Activated B cell treated with CpG ODN at 0.5 μM for 24 hours (primary cell): ENCODE measurements at regions of chr18 and their contacts with region 1.

Region 1: GRCh38 chr18:62131301-62131909 is 55.5 kb downstream of the PIGN start:
- DNase-seq: no peak
- ATAC-seq: peak; percentile 62
- H3K4me3 Mint-ChIP-seq: no peak overlapping the region
- H3K27ac Mint-ChIP-seq: no peak overlapping the region
- H3K4me1 Mint-ChIP-seq: no peaks in the 10 kb centered on the region
- H3K27me3 Mint-ChIP-seq: no peaks in the 10 kb centered on the region
- CTCF ChIP-seq: peak; percentile 82

Region 2: GRCh38 chr18:60684843-60685513 is 1446.4 kb before region 1 on chr18:
- CTCF ChIA-PET with region 1: no interaction called
- POLR2A ChIA-PET with region 1: no interaction called
- intact Hi-C with region 1: loop called (anchors 5 kb)
- DNase-seq: no peak
- ATAC-seq: no peak
- H3K4me3 Mint-ChIP-seq: no peak overlapping the region
- H3K27ac Mint-ChIP-seq: no peak overlapping the region
- H3K4me1 Mint-ChIP-seq: no peaks in the 10 kb centered on the region
- H3K27me3 Mint-ChIP-seq: no peaks in the 10 kb centered on the region
- CTCF ChIP-seq: no peak

Region 3: GRCh38 chr18:61322265-61322873 is 809.0 kb before region 1 on chr18:
- CTCF ChIA-PET with region 1: interaction called, 4 read pairs
- POLR2A ChIA-PET with region 1: no interaction called
- intact Hi-C with region 1: loop called (anchors 1 kb)
- DNase-seq: no peak
- ATAC-seq: peak; percentile 42
- H3K4me3 Mint-ChIP-seq: no peak overlapping the region
- H3K27ac Mint-ChIP-seq: no peak overlapping the region
- H3K4me1 Mint-ChIP-seq: no peaks in the 10 kb centered on the region
- H3K27me3 Mint-ChIP-seq: peaks cover 1% of the 10 kb centered on the region
- CTCF ChIP-seq: no peak

Region 4: DNA sequence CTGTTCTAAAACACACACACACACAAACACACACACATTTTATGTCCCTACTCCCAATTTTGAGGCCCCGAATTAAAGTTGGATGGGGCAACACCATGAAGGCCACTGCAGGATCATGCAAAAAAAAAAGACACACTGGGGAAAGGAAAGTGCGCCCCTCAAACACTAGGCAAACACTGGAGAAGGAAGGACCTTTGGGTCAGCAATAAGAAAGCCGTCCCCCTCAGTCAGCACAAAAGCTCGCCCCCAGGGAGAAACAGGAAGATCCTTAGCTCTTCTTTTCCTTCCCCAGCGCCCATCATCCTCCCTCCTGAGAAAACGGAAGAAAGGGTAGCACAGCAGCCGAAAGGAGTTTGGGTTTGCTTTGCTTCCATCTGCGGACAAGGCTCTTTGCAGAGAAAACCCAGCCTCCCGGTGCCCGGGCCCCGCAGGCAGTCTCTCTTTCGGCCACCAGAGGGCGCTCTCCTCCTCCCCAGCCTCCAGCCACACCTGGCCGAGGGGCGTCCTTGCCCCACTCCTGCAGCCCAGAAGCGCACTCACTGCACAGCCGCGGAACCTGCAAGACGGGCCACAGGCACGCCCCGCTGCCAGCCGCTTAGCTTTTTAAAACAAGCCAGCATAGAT is 549.7 kb before region 1 on chr18:
- CTCF ChIA-PET with region 1: interaction called, 37 read pairs
- POLR2A ChIA-PET with region 1: no interaction called
- intact Hi-C with region 1: loop called (anchors 1 kb)
- DNase-seq: peak; percentile 50
- ATAC-seq: peak; percentile 49
- H3K4me3 Mint-ChIP-seq: no peak overlapping the region
- H3K27ac Mint-ChIP-seq: no peak overlapping the region
- H3K4me1 Mint-ChIP-seq: peaks cover 6% of the 10 kb centered on the region
- H3K27me3 Mint-ChIP-seq: peaks cover 25% of the 10 kb centered on the region
- CTCF ChIP-seq: no peak

Region 5: GRCh38 chr18:61901323-61901986 is 229.9 kb before region 1 on chr18:
- CTCF ChIA-PET with region 1: interaction called, 7 read pairs
- POLR2A ChIA-PET with region 1: interaction called, 6 read pairs
- intact Hi-C with region 1: loop called (anchors 5 kb)
- DNase-seq: no peak
- ATAC-seq: peak; percentile 81
- H3K4me3 Mint-ChIP-seq: no peak overlapping the region
- H3K27ac Mint-ChIP-seq: no peak overlapping the region
- H3K4me1 Mint-ChIP-seq: no peaks in the 10 kb centered on the region
- H3K27me3 Mint-ChIP-seq: peaks cover 37% of the 10 kb centered on the region
- CTCF ChIP-seq: peak; percentile 56